ENCODE measurements at regions of chr9 and their contacts with region 1.

Region 1: GRCh38 chr9:113536483-113537228 is 73.1 kb downstream of the RGS3 start:
- DNase-seq: peak; percentile 59 to 83
- ATAC-seq: peak; percentile 45 to 82
- H3K4me3 ChIP-seq: no peak overlapping the region
- H3K27ac ChIP-seq: peak overlapping the region; percentile 78 to 87 (median 84)
- H3K4me1 ChIP-seq: peaks cover 26 to 45% of the 10 kb centered on the region in 2 donors
- H3K27me3 ChIP-seq: no peaks in the 10 kb centered on the region
- CTCF ChIP-seq: no peak
- POLR2A ChIP-seq: no peak

Region 2: DNA sequence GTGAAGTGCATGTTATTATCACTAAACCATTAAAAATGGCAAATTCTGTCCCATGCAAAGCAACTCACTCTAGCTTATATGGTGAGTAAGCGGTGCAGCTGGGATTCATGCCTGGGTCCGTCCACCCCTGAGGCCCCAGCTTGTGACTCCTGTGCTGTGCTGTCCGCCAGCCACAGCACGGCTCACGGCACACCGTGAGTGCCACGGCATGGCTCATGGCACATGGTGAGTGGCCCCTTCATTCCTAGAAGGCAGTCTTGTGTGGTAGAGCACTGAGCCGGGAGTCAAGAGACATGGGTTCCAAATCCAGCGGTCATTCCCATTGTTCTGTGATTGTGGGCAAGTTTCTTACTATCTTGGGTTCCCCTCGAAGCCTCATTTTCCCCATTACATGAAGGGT is 54.3 kb before region 1 on chr9:
- in situ Hi-C with region 1: no loop called
- intact Hi-C with region 1: no loop called
- DNase-seq: peak in 1 of 2 donors; percentile 6
- ATAC-seq: no peak
- H3K4me3 ChIP-seq: no peak overlapping the region
- H3K27ac ChIP-seq: no peak overlapping the region
- H3K4me1 ChIP-seq: peaks cover 22 to 26% of the 10 kb centered on the region in 2 donors
- H3K27me3 ChIP-seq: no peaks in the 10 kb centered on the region
- CTCF ChIP-seq: no peak
- POLR2A ChIP-seq: no peak

Region 3: DNA sequence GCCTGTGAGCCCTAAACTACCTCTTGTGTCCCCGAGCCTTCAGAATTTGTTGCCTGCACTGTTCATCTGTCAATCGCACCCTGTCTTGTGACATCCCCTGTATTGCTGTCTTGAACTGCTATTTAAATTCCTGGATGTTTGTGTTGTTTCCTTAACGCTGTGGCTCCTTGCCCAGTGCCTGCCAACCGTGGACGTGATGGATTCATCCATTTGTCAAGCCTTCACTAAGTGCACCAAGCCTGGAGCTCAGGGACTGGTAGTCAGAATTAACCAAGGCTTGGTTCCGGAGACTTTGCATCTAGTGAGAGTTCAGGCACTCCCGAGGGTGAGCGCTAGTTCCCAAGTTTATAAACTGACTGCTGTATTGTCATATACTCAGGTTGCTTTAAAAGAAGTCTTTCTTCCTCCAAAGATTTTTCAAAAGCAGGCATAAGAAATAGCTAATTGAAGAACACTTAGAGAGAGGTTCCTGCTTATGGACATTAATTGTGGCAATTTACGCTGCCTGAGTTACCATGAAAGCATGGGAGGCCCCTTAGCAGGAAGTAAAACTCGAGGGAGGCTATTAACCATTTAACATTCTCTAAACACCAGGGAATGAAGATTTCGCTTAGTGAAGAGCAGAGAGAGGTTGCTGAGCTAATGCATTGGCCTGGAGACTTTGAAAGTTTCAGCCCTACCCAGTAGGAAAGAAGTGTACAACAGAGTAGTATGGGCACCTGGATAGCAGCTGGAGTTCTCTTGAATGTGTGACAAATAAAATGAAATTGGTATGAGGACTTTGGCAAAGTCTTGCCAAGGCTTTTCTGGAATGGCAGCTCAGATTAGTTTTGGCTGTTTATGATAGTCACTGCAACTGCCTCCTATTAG is 44.1 kb before region 1 on chr9:
- in situ Hi-C with region 1: no loop called
- intact Hi-C with region 1: loop called (anchors 2 kb)
- DNase-seq: peak in 1 of 2 donors; percentile 60
- ATAC-seq: peak; percentile 13 to 16
- H3K4me3 ChIP-seq: no peak overlapping the region
- H3K27ac ChIP-seq: peak overlapping the region; percentile 83 to 87 (median 84)
- H3K4me1 ChIP-seq: peaks cover 41 to 51% of the 10 kb centered on the region in 2 donors
- H3K27me3 ChIP-seq: no peaks in the 10 kb centered on the region
- CTCF ChIP-seq: no peak
- POLR2A ChIP-seq: no peak

Measured in gastrocnemius medialis (tissue), 4 donors.